Naive thymus-derived CD4-positive, alpha-beta T cell (primary cell): ENCODE measurements at regions of chr9 and their contacts with region 1.

Region 1: DNA sequence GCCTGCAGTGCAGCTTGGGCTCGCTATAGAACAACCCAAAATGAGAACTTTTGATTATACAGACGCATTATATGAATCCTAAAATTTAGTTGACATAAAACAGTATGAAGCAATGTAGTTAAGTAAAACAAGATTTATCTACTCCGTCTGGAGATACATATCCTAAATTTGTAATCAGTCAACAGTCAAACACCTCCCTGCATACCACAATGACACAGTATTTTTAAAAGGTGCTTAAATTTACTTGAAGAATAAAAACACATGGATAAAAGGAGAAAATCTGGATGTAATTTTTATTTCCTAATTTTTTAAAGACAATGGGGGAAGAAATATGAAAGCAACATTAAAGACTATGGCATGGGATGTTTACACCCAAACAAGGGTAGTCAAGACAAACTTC is 70.8 kb downstream of the PTBP3 start:
- DNase-seq: no peak
- ATAC-seq: no peak
- H3K4me3 ChIP-seq: no peak overlapping the region
- H3K4me3 Mint-ChIP-seq: no peak overlapping the region
- H3K27ac ChIP-seq: no peak overlapping the region
- H3K27ac Mint-ChIP-seq: no peak overlapping the region
- H3K4me1 ChIP-seq: no peaks in the 10 kb centered on the region
- H3K4me1 Mint-ChIP-seq: peaks cover 9 to 53% (median 35%) of the 10 kb centered on the region in 7 donors
- H3K27me3 ChIP-seq: no peaks in the 10 kb centered on the region
- H3K27me3 Mint-ChIP-seq: no peaks in the 10 kb centered on the region

Region 2: GRCh38 chr9:112028280-112029221 is 234.0 kb before region 1 on chr9:
- CTCF ChIA-PET with region 1: no interaction called
- POLR2A ChIA-PET with region 1: no interaction called
- intact Hi-C with region 1: no loop called
- DNase-seq: no peak
- ATAC-seq: no peak
- H3K4me3 ChIP-seq: no peak overlapping the region
- H3K4me3 Mint-ChIP-seq: no peak overlapping the region
- H3K27ac ChIP-seq: no peak overlapping the region
- H3K27ac Mint-ChIP-seq: no peak overlapping the region
- H3K4me1 ChIP-seq: peaks cover 0 to 4% of the 10 kb centered on the region in 2 donors
- H3K4me1 Mint-ChIP-seq: peaks cover 10 to 34% (median 18%) of the 10 kb centered on the region in 7 donors
- H3K27me3 ChIP-seq: no peaks in the 10 kb centered on the region
- H3K27me3 Mint-ChIP-seq: peaks cover 0 to 12% (median 4%) of the 10 kb centered on the region in 5 donors

Region 3: GRCh38 chr9:112224401-112225289 is 37.9 kb before region 1 on chr9:
- CTCF ChIA-PET with region 1: no interaction called
- POLR2A ChIA-PET with region 1: no interaction called
- intact Hi-C with region 1: no loop called
- DNase-seq: no peak
- ATAC-seq: peak; percentile 65
- H3K4me3 ChIP-seq: no peak overlapping the region
- H3K4me3 Mint-ChIP-seq: no peak overlapping the region
- H3K27ac ChIP-seq: no peak overlapping the region
- H3K27ac Mint-ChIP-seq: peak overlapping the region in 2 of 9 donors; percentile 2 to 57
- H3K4me1 ChIP-seq: no peaks in the 10 kb centered on the region
- H3K4me1 Mint-ChIP-seq: peaks cover 4 to 22% (median 11%) of the 10 kb centered on the region in 7 donors
- H3K27me3 ChIP-seq: no peaks in the 10 kb centered on the region
- H3K27me3 Mint-ChIP-seq: no peaks in the 10 kb centered on the region

Region 4: DNA sequence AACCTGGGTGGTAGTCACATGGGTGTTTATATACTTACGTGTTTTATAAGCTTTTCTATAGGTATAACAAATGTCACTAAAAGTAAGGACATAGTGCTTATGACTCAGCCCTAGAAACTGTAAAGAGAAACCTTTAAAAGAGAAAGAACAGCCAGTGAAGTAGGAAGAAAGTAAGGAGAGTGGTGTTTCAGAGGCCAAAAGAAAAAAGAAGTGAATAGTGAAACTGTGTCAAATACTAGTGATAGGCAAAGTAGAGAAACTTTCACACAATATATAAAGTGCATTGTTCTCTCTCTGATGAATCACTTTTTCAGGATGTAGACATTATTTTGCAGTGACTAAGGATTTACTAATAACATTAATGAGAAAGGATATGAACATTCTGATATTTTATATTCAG is 13.3 kb before region 1 on chr9:
- CTCF ChIA-PET with region 1: no interaction called
- POLR2A ChIA-PET with region 1: no interaction called
- intact Hi-C with region 1: loop called in 1 of 2 experiments (anchors 2 kb)
- DNase-seq: no peak
- ATAC-seq: no peak
- H3K4me3 ChIP-seq: no peak overlapping the region
- H3K4me3 Mint-ChIP-seq: no peak overlapping the region
- H3K27ac ChIP-seq: no peak overlapping the region
- H3K27ac Mint-ChIP-seq: peak overlapping the region in 2 of 9 donors; percentile 1 to 42
- H3K4me1 ChIP-seq: no peaks in the 10 kb centered on the region
- H3K4me1 Mint-ChIP-seq: peaks cover 13 to 20% (median 15%) of the 10 kb centered on the region in 7 donors
- H3K27me3 ChIP-seq: no peaks in the 10 kb centered on the region
- H3K27me3 Mint-ChIP-seq: no peaks in the 10 kb centered on the region

Region 5: GRCh38 chr9:112274600-112274999 is 12.0 kb after region 1 on chr9:
- CTCF ChIA-PET with region 1: no interaction called
- POLR2A ChIA-PET with region 1: no interaction called
- intact Hi-C with region 1: no loop called
- DNase-seq: no peak
- ATAC-seq: no peak
- H3K4me3 ChIP-seq: no peak overlapping the region
- H3K4me3 Mint-ChIP-seq: peak overlapping the region in 1 of 10 donors; percentile 35
- H3K27ac ChIP-seq: no peak overlapping the region
- H3K27ac Mint-ChIP-seq: peak overlapping the region in 3 of 9 donors; percentile 15 to 32 (median 31)
- H3K4me1 ChIP-seq: peaks cover 0 to 9% of the 10 kb centered on the region in 2 donors
- H3K4me1 Mint-ChIP-seq: peaks cover 31 to 78% (median 67%) of the 10 kb centered on the region in 7 donors
- H3K27me3 ChIP-seq: no peaks in the 10 kb centered on the region
- H3K27me3 Mint-ChIP-seq: no peaks in the 10 kb centered on the region